Ovary (tissue), 10 donors: ENCODE measurements at regions of chr6 and their contacts with region 1.

Region 1: DNA sequence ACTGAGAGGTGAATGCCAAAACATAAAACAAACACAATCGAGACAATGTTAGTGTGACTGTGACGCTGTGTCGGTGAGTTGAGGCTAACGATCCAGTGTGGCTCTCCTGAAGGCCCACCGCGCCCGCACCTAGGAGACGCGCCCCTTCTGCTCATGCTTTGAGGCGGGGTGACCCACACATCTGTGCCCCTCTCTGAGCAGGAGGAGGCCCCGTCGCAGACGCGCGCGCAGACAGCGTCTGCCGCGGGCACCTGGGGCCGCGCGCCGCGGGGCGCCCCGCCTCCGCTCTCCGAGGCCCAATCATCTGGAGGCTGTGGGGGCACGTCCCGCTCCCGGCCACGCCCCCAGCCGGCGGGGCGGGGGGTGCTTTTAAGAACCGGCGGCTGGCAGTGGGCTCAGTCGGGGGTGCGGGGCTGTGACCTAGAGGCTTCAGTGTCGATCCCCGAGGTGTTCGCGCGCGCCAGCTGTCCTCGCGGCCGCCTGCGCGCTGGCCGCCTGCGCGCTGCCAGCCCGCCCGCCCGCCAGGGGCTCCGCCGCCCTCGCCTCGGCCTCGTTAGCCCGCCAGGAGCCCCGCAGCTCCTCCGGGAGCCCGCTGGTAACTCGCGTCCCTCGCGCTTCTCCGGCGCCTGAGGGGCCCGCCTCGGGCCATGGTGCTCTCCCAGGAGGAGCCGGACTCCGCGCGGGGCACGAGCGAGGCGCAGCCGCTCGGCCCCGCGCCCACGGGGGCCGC is at the start of gene SLC16A10:
- DNase-seq: peak; percentile 71 to 84 (median 77)
- H3K4me3 ChIP-seq: peak within 1 kb of the TSS; percentile 53
- H3K27ac ChIP-seq: peak within 1 kb of the TSS in 1 of 2 donors; percentile 57
- H3K4me1 ChIP-seq: no peaks in the 10 kb centered on the region
- H3K27me3 ChIP-seq: no peaks in the 10 kb centered on the region
- CTCF ChIP-seq: no peak
- EP300 ChIP-seq: no peak
- POLR2A ChIP-seq: peak; percentile 57
- total RNA-seq, gene SLC16A10: 3.6 to 10.8 (median 4.6) TPM

Region 2: DNA sequence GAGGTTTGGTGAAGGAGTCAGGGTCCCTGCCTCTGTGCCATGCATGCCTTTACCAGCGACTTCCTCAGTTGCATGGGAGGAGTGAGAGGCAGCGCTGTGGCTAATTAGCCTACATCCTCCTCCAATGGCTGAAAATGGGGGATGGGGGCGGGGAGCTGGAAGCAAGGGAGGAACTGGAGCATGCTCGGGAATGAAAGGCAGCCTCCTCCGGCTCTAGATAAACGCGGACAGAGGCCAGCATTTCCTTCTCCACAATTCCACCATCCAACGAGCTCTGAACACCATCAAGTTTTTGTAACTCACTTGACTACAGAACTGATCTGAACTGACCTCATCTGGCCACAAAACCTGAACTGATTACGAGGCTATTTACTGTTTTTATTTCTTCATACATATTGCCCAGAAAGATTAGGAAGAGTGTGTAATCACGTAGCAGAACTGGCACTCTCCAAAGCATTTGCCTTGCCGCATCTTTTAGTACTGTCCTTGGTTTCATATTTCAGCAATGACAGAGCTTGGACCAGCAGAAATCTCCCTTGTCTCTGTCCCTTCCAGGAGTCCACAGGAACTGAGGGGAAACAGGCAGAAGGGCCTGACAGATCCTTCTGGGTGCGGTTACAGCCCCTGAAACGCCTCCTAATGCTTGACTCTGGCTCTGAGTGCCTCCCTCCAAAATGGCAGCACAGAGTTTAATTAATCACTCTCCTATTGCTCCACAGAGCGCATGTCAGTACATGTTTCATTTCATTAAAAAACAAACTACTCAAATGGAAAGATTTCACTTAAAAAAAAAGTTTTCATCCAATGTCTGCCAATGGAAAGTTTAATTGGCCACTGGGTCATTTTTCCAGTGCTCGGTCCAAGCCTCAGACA is 576.7 kb after region 1 on chr6:
- intact Hi-C with region 1: loop called in 1 of 4 experiments (anchors 10 kb)
- DNase-seq: peak in 4 of 5 donors; percentile 30 to 69 (median 58)
- H3K4me3 ChIP-seq: no peak overlapping the region
- H3K27ac ChIP-seq: peak overlapping the region in 1 of 2 donors; percentile 4
- H3K4me1 ChIP-seq: peaks cover 15% of the 10 kb centered on the region
- H3K27me3 ChIP-seq: no peaks in the 10 kb centered on the region
- CTCF ChIP-seq: no peak
- EP300 ChIP-seq: no peak
- POLR2A ChIP-seq: no peak